Cardiac septum (tissue), 1 donor: ENCODE measurements at regions of chr14 and their contacts with region 1.

Region 1: DNA sequence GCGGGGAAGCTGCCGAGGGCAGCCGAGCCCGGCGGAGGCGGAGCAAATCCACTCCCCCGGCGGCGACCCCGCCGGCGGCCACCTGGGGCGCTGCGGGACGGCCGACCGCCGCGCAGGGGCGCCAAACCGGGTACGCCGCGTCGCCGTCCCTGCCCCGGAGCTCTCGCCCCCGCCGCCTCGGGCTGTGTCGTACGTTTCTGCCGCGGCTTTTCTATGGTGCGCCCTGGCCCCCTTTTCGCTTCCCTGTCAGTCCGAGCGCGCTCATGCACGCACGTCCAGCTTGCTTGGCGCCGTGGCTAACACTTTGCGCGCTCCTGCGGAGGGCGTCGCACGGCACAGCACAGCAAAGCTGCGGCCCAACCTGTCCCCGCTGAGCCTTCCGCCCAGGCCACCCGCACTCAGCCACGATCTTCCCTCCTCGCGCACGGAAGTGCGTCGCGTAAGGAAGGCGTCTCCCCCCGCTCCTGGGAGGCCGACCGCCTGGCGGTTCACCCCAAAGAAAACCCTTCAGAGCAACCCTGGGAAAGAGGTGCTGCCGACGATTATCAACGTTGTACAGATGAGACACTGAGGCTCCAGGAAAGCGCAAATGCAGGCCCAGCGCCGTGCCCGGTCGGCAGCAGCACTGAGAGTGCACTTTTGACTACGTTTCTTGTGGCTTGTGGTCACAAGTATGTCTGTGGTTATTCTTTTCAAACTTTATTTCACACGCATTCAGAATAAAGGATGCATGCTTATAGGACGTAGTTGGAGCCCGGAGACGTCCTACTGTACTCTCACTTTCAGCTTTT is at the start of gene HECTD1:
- DNase-seq: peak; percentile 95
- total RNA-seq, gene HECTD1: 158 TPM

Region 2: DNA sequence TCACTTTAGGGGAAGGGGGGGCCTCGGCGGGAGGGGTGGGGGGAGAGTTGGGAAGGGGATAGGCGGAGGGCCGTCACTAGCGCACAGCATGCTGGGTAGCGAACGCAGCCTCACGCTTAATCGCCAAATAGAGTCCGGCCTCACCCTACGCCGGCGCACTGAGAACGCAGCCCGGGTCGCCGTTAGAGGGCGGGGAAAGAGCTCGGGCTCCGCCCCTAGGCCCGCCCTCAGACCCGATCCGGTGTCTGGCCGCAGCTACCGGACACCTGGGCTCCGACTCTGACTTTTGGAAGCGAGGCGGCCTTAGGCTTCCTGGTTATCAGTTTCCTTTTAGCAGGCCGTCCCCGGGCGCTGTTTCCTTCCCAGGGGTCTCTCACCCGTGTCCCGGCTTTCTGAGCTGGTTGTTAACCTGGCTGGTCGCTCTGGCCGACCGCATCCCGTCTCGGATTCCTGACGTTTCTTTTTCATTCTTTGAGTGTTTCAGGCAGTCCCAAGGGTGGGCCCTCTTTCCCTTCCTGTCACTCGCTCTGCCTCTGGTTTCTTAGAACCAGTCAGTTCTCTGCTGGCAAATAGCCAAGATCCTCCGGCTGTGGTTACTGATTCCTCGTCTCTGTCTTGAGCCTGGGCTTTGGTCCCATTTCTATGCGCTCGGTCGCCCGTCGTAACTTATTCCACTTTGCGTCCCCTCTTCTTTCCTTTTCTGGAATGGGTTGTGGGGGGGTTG is 181.4 kb before region 1 on chr14:
- intact Hi-C with region 1: loop called (anchors 5 kb)
- DNase-seq: peak; percentile 99

Region 3: GRCh38 chr14:31164115-31164514 is 43.8 kb before region 1 on chr14:
- intact Hi-C with region 1: loop called (anchors 2 kb)
- DNase-seq: no peak

Region 4: GRCh38 chr14:31357279-31357678 is 149.3 kb after region 1 on chr14:
- intact Hi-C with region 1: loop called (anchors 10 kb)
- DNase-seq: no peak